CD4-positive, alpha-beta memory T cell (primary cell): ENCODE measurements at regions of chr17 and their contacts with region 1.

Region 1: DNA sequence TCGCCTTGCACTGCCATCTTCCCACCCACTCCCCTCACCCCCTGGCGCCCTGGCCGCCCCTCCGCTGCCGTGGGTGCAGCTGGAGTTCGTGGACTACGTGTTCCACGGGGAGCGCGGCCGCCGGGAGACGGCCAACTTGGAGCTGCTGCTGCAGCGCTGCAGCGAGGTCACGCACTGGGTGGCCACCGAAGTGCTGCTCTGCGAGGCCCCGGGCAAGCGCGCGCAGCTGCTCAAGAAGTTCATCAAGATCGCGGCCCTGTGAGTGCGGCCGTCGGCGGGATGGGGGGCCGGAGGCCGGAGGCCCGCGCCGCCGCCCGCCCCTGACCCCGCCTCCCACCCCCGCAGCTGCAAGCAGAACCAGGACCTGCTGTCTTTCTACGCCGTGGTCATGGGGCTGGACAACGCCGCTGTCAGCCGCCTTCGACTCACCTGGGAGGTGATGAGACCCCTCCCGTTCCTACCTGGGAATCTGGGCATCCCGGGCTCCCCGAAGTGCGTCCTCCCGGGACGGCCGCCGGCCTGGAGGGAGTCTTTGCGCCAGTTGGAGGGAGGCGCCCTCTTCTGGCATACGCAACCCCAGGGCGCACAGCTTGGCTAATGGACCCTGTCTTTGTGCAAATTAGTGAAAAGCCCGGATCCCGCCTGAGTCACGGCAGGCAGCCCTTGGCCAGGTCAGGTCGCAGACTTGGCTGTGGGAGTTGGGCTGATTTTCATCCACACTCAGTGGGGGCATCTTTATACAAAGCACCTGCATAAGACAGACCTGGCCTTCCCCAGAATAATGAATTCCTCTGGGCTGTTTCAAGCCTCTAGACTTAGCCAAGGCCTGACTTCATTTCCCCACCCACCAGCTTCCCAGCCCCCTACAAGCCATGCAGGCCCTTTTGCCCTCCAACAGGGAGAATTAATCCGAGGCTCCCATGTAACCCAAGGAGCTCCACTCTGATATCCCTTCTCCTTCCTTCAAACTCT is 14.3 kb downstream of the RAPGEFL1 start:
- DNase-seq: peak; percentile 52 to 67 (median 56)
- H3K4me3 ChIP-seq: peak overlapping the region; percentile 46 to 52
- H3K4me3 Mint-ChIP-seq: peak overlapping the region; percentile 90 to 96 (median 92)
- H3K27ac ChIP-seq: no peak overlapping the region
- H3K27ac Mint-ChIP-seq: peak overlapping the region in 5 of 7 donors; percentile 24 to 84 (median 82)
- H3K4me1 ChIP-seq: peaks cover 6% of the 10 kb centered on the region
- H3K4me1 Mint-ChIP-seq: peaks cover 0 to 11% (median 7%) of the 10 kb centered on the region in 4 donors
- H3K27me3 ChIP-seq: no peaks in the 10 kb centered on the region
- H3K27me3 Mint-ChIP-seq: no peaks in the 10 kb centered on the region

Region 2: DNA sequence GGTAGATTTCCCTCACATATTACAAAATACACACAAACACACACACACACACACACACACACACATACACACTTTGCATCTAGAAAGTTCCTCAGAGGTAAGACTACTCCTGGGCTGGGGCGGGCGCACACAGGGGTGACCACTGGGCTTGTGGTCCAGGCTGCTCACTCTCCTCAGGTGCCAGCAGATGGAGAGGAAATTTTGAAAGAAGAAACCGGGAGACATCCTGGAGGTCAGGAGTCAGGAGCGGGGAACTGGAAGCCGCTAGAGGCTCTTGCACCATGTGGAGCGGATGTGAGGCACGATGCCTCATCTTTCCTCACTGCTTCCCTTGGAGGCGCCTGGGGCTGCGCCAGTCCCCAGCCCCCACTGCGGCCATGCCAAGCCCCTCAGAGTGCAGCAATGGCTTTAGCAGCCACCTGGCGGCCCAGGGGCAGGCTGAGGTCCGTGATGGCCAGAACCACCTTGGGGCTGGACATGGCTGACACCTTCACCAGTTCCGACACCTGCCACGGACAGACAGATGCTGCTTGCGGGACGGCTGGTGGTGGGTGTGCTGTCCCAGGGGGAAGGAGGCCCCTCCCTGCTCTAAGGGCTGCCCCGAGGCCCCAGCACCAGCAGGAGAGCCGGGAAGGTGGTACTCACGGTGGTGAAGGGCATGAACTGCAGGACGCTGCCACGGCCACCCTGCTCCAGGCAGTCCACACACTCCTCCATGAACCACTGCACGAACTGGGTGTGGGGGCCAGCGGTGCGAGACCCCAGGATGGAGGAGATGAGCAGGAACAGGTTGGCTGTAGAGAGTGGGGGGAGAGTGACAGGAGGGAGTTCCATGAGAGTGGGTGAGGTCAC is 172.2 kb before region 1 on chr17:
- CTCF ChIA-PET with region 1: interaction called, 25 read pairs
- POLR2A ChIA-PET with region 1: no interaction called
- intact Hi-C with region 1: no loop called
- DNase-seq: no peak
- H3K4me3 ChIP-seq: no peak overlapping the region
- H3K4me3 Mint-ChIP-seq: no peak overlapping the region
- H3K27ac ChIP-seq: no peak overlapping the region
- H3K27ac Mint-ChIP-seq: peak overlapping the region in 2 of 7 donors; percentile 57 to 68
- H3K4me1 ChIP-seq: no peaks in the 10 kb centered on the region
- H3K4me1 Mint-ChIP-seq: no peaks in the 10 kb centered on the region
- H3K27me3 ChIP-seq: no peaks in the 10 kb centered on the region
- H3K27me3 Mint-ChIP-seq: no peaks in the 10 kb centered on the region

Region 3: GRCh38 chr17:40062329-40063186 is 129.0 kb before region 1 on chr17 and contains the start of gene THRA:
- CTCF ChIA-PET with region 1: interaction called, 13 read pairs
- POLR2A ChIA-PET with region 1: no interaction called
- intact Hi-C with region 1: no loop called
- DNase-seq: peak; percentile 71 to 75 (median 73)
- H3K4me3 ChIP-seq: peak within 1 kb of the TSS; percentile 57 to 70
- H3K4me3 Mint-ChIP-seq: peak within 1 kb of the TSS; percentile 90 to 96 (median 94)
- H3K27ac ChIP-seq: peak within 1 kb of the TSS; percentile 70
- H3K27ac Mint-ChIP-seq: peak within 1 kb of the TSS; percentile 81 to 96 (median 91)
- H3K4me1 ChIP-seq: peaks cover 49% of the 10 kb centered on the region
- H3K4me1 Mint-ChIP-seq: peaks cover 33 to 53% (median 42%) of the 10 kb centered on the region in 4 donors
- H3K27me3 ChIP-seq: peaks cover 3% of the 10 kb centered on the region
- H3K27me3 Mint-ChIP-seq: peaks cover 1% of the 10 kb centered on the region in 2 donors
- total RNA-seq, gene THRA: 35.9 to 41.3 TPM

Region 4: DNA sequence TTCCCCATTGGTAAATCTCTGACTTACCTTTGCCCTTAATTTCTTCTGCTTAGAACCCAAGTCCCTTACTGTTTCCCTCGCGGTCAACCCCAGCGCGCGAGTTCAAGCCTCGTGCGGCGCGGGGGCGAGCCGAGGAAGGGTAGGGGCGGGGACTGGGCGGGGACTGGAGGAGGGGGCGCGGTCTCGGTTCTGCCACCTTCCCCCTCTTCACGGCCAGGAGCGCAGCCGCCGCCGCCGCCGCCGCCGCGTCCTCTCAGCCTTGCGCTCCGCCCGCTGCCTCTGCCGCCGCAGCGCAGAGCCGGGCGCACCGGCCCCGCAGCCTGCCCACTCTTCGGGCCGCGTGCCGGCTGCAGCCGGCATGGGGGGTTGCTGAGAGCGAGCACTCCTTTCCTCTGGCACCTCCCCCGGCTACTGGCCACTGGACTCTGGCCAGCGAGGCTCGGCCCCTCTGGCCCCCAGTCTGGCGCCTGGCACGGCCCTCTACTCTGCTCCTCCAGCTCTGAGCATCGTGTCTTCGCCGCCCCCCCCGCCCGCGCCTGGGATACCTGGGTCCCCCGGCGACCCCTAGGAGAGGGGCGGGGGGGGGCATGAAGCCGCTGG is 14.1 kb before region 1 on chr17 and contains the start of gene RAPGEFL1:
- CTCF ChIA-PET with region 1: interaction called, 9 read pairs
- POLR2A ChIA-PET with region 1: interaction called, 11 read pairs
- intact Hi-C with region 1: no loop called
- DNase-seq: peak; percentile 69 to 83 (median 76)
- H3K4me3 ChIP-seq: peak within 1 kb of the TSS in 1 of 2 donors; percentile 32
- H3K4me3 Mint-ChIP-seq: peak within 1 kb of the TSS; percentile 40 to 79 (median 62)
- H3K27ac ChIP-seq: no peak within 1 kb of the TSS
- H3K27ac Mint-ChIP-seq: peak within 1 kb of the TSS; percentile 41 to 90 (median 83)
- H3K4me1 ChIP-seq: peaks cover 7% of the 10 kb centered on the region
- H3K4me1 Mint-ChIP-seq: peaks cover 6 to 17% (median 8%) of the 10 kb centered on the region in 4 donors
- H3K27me3 ChIP-seq: no peaks in the 10 kb centered on the region
- H3K27me3 Mint-ChIP-seq: no peaks in the 10 kb centered on the region
- total RNA-seq, gene RAPGEFL1: 5.4 to 6.5 TPM

Region 5: DNA sequence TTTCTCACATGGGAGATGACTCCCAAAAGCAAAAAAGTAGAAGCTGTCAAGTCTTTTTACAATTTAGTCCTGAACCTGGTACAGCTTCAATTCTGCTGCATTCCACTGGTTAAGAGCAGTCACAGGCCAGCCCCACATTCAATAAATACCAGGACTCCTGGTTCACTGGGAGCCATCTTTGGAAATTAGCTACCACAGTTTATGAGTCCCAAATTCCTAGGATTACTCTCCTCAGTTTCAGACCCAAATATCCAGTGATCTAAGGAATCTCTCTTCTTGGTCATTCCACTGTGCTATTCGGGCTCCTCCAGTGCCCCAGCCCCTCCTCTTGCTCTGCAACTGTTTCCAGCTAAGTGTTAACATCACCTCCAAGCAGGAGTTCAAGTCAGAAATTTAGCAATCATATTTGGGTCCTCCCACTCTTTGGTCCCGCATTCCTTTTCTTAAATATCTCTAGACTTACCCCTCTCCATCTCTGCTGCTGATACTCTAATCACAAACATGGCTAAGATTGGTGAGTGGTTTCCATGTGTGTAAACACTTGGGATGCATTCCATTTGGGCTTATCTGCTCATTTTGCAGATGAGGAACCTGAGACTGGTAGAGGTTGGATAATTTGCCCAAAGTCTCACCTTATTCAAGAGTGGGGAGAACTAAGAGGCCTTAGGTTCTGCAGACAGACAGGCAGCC is 18.0 kb after region 1 on chr17:
- CTCF ChIA-PET with region 1: interaction called, 34 read pairs
- POLR2A ChIA-PET with region 1: no interaction called
- intact Hi-C with region 1: no loop called
- DNase-seq: no peak
- H3K4me3 ChIP-seq: no peak overlapping the region
- H3K4me3 Mint-ChIP-seq: no peak overlapping the region
- H3K27ac ChIP-seq: no peak overlapping the region
- H3K27ac Mint-ChIP-seq: no peak overlapping the region
- H3K4me1 ChIP-seq: no peaks in the 10 kb centered on the region
- H3K4me1 Mint-ChIP-seq: no peaks in the 10 kb centered on the region
- H3K27me3 ChIP-seq: no peaks in the 10 kb centered on the region
- H3K27me3 Mint-ChIP-seq: peaks cover 0 to 1% of the 10 kb centered on the region in 2 donors

Region 6: GRCh38 chr17:40264458-40265185 is 73.1 kb after region 1 on chr17:
- CTCF ChIA-PET with region 1: no interaction called
- POLR2A ChIA-PET with region 1: no interaction called
- intact Hi-C with region 1: no loop called
- DNase-seq: no peak
- H3K4me3 ChIP-seq: no peak overlapping the region
- H3K4me3 Mint-ChIP-seq: no peak overlapping the region
- H3K27ac ChIP-seq: no peak overlapping the region
- H3K27ac Mint-ChIP-seq: no peak overlapping the region
- H3K4me1 ChIP-seq: no peaks in the 10 kb centered on the region
- H3K4me1 Mint-ChIP-seq: peaks cover 0 to 3% (median 1%) of the 10 kb centered on the region in 4 donors
- H3K27me3 ChIP-seq: no peaks in the 10 kb centered on the region
- H3K27me3 Mint-ChIP-seq: no peaks in the 10 kb centered on the region

Region 7: GRCh38 chr17:40362696-40363110 is 171.2 kb after region 1 on chr17:
- CTCF ChIA-PET with region 1: no interaction called
- POLR2A ChIA-PET with region 1: no interaction called
- intact Hi-C with region 1: no loop called
- DNase-seq: peak; percentile 72 to 76 (median 74)
- H3K4me3 ChIP-seq: peak overlapping the region in 1 of 2 donors; percentile 47
- H3K4me3 Mint-ChIP-seq: peak overlapping the region in 7 of 8 donors; percentile 39 to 82 (median 64)
- H3K27ac ChIP-seq: no peak overlapping the region
- H3K27ac Mint-ChIP-seq: peak overlapping the region in 3 of 7 donors; percentile 11 to 69 (median 57)
- H3K4me1 ChIP-seq: peaks cover 21% of the 10 kb centered on the region
- H3K4me1 Mint-ChIP-seq: peaks cover 5 to 12% (median 9%) of the 10 kb centered on the region in 4 donors
- H3K27me3 ChIP-seq: no peaks in the 10 kb centered on the region
- H3K27me3 Mint-ChIP-seq: peaks cover 0 to 7% of the 10 kb centered on the region in 2 donors